Posterior vena cava (tissue), 2 donors: ENCODE measurements at regions of chr1 and their contacts with region 1.

Region 1: GRCh38 chr1:45594412-45594811 is 10.6 kb downstream of the NASP start:
- DNase-seq: no peak

Region 2: DNA sequence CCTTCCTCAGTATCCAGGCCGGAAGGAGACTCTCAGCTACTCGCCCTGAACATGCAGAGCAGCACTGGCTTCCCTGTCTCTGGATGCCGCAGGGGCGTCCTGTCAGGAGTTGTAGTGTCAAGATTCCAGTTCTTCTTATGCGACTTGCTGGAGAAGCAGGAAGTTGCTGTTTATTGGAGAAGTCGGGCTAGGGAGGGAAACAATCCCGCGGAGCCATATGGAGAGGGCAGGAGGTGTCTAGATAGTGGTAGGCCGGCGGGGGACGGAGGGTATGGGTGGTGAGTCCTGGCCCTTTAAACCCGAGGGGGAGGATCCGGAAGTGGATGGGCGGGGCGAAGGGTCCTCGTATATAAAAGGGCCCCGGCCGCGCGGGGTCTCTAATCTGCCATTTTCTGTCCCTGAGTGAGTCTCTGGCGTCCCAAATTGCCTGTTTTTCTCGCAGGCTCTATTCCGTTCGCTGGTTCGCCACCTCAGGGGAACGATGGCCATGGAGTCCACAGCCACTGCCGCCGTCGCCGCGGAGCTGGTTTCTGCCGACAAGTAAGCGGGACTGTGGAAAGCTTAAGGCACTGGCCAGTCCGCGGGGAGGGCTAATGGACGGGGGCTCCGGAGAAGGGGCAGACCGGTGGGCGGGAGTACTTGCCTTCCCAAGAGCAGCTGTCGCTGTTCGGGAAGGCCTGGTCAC is 10.6 kb before region 1 on chr1 and contains the start of gene NASP:
- intact Hi-C with region 1: loop called in 1 of 2 experiments (anchors 1 kb)
- DNase-seq: peak; percentile 96
- total RNA-seq, gene NASP: 36.7 to 45.5 TPM

Region 3: GRCh38 chr1:45643978-45644377 is 49.6 kb after region 1 on chr1:
- intact Hi-C with region 1: no loop called
- DNase-seq: no peak